Activated T-helper 2 cell treated with anti-CD3 and anti-CD28 coated beads, Interferon-gamma antibody, Interleukin-2, Interleukin-4, amounts not matched to agents 10 μg/mL and 5 μg/mL and 100 μg/mL, durations not matched to agents 14 hours and 24 hours and 36 hours (primary cell): ENCODE measurements at regions of chr2 and their contacts with region 1.

Region 1: DNA sequence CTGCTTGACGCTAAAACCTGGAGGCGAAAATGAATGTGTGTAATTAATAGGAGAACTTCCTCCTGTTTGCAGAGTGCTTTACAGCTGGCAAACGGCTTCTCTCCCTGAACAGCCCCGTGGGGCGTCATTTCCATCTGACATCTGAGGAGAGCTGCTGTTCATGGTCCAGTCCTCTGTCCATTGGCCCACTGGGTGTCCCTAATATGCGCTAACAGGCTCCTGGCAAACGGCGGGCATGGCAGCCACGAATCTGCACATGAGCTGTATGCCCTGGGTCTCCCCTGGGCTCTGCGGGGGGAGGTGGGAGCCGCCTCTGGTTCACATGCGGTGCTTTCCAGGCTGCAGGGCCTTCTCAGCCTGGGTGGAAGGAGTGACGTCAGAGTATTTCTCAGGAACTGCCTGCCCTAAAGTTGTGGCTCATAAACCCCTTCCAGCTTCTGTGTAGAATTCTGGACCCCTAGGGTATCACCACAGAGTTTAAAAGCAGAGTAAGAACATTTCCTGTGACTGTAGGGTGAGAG is 73.2 kb downstream of the LRRFIP1 start:
- DNase-seq: peak; percentile 63
- H3K4me3 Mint-ChIP-seq: peak overlapping the region; percentile 80
- H3K27ac Mint-ChIP-seq: peak overlapping the region; percentile 96
- H3K4me1 Mint-ChIP-seq: peaks cover 87% of the 10 kb centered on the region
- H3K27me3 Mint-ChIP-seq: no peaks in the 10 kb centered on the region

Region 2: GRCh38 chr2:237427769-237428506 is 272.6 kb before region 1 on chr2:
- intact Hi-C with region 1: loop called (anchors 5 kb)
- DNase-seq: peak; percentile 31
- H3K4me3 Mint-ChIP-seq: peak overlapping the region; percentile 55
- H3K27ac Mint-ChIP-seq: peak overlapping the region; percentile 84
- H3K4me1 Mint-ChIP-seq: peaks cover 69% of the 10 kb centered on the region
- H3K27me3 Mint-ChIP-seq: peaks cover 3% of the 10 kb centered on the region

Region 3: DNA sequence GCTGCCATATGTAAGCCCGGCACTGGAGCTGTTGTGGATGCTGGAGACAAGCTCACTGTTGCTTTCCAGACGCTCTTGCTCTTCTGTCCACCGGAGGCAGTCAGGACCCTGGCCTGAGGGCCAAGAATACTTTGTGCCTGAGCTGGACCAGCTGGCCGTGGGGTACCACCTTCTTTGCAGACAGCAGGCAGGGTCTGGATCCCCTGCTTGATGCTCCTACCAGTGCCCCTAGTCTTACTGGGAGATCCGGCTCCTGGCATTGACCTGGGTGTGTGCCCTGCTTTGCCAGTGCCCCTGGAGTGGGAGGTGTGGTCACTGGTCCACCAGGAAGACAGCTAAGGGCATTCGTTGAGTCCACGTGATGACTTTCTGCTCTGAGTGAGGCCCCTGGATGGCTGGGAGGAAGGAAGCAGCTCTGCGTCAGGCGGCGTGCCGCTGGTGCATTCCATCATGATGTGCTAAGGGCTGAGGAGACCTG is 13.9 kb before region 1 on chr2:
- intact Hi-C with region 1: loop called (anchors 2 kb)
- DNase-seq: no peak
- H3K4me3 Mint-ChIP-seq: no peak overlapping the region
- H3K27ac Mint-ChIP-seq: peak overlapping the region; percentile 50
- H3K4me1 Mint-ChIP-seq: peaks cover 45% of the 10 kb centered on the region
- H3K27me3 Mint-ChIP-seq: no peaks in the 10 kb centered on the region

Region 4: DNA sequence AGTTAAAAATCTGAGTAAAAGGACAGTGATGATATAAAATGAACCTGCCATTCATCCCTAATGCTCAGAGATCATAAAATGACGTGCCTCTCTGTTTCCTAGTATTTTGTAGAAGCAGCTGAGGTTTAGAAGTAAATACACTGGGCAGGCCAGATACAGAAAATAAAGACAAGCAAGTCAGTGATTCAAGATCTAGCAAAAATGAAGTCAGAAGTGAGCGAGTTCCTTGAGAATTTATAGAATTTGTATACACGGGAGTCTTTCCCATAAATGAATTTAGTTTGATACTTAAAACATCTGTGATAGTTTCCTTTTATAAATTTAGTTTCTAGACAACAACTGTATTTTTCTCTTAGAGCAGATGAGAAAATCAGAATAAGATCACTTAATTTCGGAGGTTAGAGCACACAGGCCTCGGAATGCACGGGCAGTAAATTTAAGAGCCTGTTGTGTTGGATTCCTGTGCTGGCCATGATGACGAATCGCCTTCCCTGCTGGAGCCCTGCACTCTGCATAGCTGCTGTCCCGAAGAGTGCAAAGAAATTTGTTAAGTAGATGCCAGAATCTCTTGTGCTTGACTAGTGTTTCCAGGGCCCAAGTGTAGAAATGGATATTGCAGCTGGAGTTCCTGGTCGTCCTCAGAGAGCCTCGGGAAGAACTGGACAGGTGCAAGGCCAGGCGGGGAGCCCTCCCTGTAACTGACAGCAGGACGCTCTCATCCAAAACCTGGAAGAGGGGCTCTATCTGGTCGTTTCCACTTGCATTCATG is 14.3 kb after region 1 on chr2:
- intact Hi-C with region 1: loop called (anchors 2 kb)
- DNase-seq: no peak
- H3K4me3 Mint-ChIP-seq: no peak overlapping the region
- H3K27ac Mint-ChIP-seq: peak overlapping the region; percentile 49
- H3K4me1 Mint-ChIP-seq: peaks cover 37% of the 10 kb centered on the region
- H3K27me3 Mint-ChIP-seq: no peaks in the 10 kb centered on the region

Region 5: DNA sequence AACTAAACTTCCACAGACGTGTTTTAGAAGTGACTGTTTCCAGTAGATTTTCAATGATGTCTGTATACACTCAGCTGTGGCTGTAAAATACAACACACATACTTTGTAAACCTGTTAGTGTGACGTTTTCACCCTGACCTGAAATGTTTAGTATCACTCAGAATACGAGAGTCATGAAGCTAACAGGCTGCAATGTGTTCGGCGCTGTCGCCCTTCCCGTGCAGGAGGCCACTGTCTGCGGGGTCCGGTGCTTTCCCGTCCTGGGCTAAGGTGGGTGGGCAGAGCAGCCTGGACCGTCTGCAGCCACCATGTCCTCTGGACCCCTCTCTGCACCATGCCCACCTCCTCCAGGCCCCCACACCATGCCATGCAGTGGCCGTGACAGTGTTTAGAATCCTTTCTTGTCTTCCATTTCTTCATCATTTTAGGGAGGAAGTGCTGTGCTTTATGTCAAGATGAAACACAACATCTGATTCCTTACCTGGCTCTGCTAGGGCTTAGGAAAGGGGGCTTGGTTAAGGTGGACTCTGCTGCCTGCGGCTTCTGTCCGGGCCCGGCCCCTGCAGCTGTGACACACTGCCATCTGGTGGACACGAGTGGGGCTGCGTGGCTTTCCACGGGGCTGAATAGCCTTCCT is 44.2 kb after region 1 on chr2:
- intact Hi-C with region 1: loop called (anchors 2 kb)
- DNase-seq: peak; percentile 53
- H3K4me3 Mint-ChIP-seq: no peak overlapping the region
- H3K27ac Mint-ChIP-seq: peak overlapping the region; percentile 68
- H3K4me1 Mint-ChIP-seq: peaks cover 14% of the 10 kb centered on the region
- H3K27me3 Mint-ChIP-seq: no peaks in the 10 kb centered on the region

Region 6: GRCh38 chr2:237752761-237753165 is 52.2 kb after region 1 on chr2:
- intact Hi-C with region 1: loop called (anchors 2 kb)
- DNase-seq: no peak
- H3K4me3 Mint-ChIP-seq: no peak overlapping the region
- H3K27ac Mint-ChIP-seq: peak overlapping the region; percentile 86
- H3K4me1 Mint-ChIP-seq: peaks cover 23% of the 10 kb centered on the region
- H3K27me3 Mint-ChIP-seq: no peaks in the 10 kb centered on the region

Region 7: GRCh38 chr2:238389926-238390597 is 689.5 kb after region 1 on chr2:
- intact Hi-C with region 1: no loop called
- DNase-seq: no peak
- H3K4me3 Mint-ChIP-seq: no peak overlapping the region
- H3K27ac Mint-ChIP-seq: no peak overlapping the region
- H3K4me1 Mint-ChIP-seq: peaks cover 2% of the 10 kb centered on the region
- H3K27me3 Mint-ChIP-seq: peaks cover 2% of the 10 kb centered on the region